ENCODE measurements at regions of chr5 and their contacts with region 1.

Region 1: GRCh38 chr5:16934123-16934522 is 2.0 kb downstream of the MYO10 start:
- DNase-seq: no peak
- H3K4me3 Mint-ChIP-seq: peak overlapping the region; percentile 58
- H3K27ac Mint-ChIP-seq: no peak overlapping the region
- H3K4me1 Mint-ChIP-seq: peaks cover 25% of the 10 kb centered on the region
- H3K27me3 Mint-ChIP-seq: peaks cover 55% of the 10 kb centered on the region

Region 2: GRCh38 chr5:16366491-16366890 is 567.6 kb before region 1 on chr5:
- intact Hi-C with region 1: no loop called
- DNase-seq: no peak
- H3K4me3 Mint-ChIP-seq: no peak overlapping the region
- H3K27ac Mint-ChIP-seq: no peak overlapping the region
- H3K4me1 Mint-ChIP-seq: no peaks in the 10 kb centered on the region
- H3K27me3 Mint-ChIP-seq: no peaks in the 10 kb centered on the region

Region 3: DNA sequence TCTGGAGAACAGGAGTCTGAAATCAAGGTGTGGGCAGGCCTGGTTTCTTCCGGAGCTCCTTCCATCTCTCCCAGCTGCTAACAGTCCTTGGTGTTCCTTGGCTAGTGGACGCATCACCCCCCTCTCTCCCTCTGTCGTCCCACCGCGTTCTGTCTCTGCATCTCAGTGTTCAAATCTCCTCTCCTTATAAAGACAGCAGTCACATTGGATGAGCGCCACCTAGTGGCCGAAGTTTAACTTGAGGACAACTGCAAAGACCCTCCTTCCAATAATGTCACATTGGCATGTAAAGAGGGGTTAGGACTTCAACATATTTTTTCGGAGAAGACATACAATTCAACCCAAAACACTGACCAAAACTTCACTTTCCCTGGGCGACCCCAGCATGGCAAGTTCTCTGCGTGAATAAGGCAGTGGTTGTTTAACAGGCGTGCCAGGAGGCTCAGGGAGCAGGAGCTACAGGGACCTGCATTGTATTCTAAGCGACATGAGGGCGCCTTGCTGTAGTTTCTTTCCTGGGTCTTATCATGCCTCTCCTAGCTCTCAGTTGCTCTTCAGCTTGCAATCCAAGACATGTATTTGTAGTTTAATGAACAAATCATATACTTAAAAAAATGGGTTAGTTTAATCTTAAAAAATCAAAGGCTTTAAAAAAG is 255.4 kb after region 1 on chr5:
- intact Hi-C with region 1: loop called (anchors 10 kb)
- DNase-seq: peak; percentile 11
- H3K4me3 Mint-ChIP-seq: no peak overlapping the region
- H3K27ac Mint-ChIP-seq: no peak overlapping the region
- H3K4me1 Mint-ChIP-seq: no peaks in the 10 kb centered on the region
- H3K27me3 Mint-ChIP-seq: peaks cover 2% of the 10 kb centered on the region

Measured in activated T-helper 1 cell treated with anti-CD3 and anti-CD28 coated beads, Interleukin-12 subunit alpha, Interleukin-12 subunit beta, Interleukin-2, Interleukin-4 antibody, amounts not matched to agents 30 ng/mL and 10 ng/mL and 1 ng/mL, durations not matched to agents 14 hours and 24 hours and 36 hours (primary cell).